ENCODE measurements at regions of chr2 and their contacts with region 1.

Region 1: GRCh38 chr2:3780477-3781402 is 77.4 kb downstream of the DCDC2C start:
- DNase-seq: peak in 1 of 2 experiments; percentile 16
- H3K4me3 ChIP-seq: no peak overlapping the region
- H3K27ac ChIP-seq: no peak overlapping the region
- H3K4me1 ChIP-seq: no peaks in the 10 kb centered on the region
- H3K27me3 ChIP-seq: peaks cover 94% of the 10 kb centered on the region
- CTCF ChIP-seq: peak; percentile 66

Region 2: DNA sequence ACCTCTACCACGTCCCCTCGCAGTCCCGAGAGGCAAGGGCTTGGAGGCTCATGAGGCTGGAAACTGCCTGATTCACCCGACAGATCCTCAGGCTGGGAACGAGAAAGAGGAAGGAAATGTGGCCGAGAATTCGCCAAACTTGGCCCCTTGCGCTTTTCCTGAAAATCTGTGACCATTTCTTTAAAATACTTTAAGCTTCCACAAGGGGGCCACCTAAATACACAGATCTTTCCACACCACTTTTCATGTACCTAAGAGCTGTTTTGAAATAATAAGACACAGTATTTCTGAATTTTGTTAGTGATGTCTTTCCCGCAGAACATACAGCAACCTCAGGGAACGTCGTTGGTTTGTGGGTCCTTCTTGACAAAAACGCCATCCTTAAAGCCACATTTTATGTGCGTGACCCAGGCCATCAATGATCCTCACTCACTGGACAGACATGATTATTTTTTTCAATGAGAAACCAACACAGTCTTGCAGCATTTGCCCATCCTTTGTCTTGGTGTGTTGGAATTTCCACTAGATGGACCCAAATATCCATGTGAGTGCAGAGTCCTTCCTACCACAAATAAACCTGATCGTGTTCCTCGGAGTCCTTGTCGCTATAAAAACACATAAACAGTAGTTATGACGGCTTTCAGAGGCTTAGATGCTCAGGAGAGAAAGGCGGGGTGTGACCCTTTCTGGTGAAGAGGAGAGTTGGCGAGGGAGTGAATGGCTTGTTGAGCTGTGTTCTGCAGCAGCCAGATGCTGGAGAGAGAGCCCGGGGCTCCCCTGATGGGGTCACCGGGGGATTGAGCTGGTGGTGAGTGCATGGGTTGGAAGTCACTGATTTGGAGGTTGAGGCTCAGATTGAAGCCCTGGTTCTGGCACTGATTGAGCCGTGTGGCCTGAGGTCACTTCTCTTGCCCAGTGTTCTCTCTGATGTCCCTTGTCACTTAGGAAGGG is 52.4 kb before region 1 on chr2:
- CTCF ChIA-PET with region 1: no interaction called
- POLR2A ChIA-PET with region 1: no interaction called
- intact Hi-C with region 1: loop called (anchors 2 kb)
- DNase-seq: peak in 1 of 2 experiments; percentile 42
- H3K4me3 ChIP-seq: no peak overlapping the region
- H3K27ac ChIP-seq: no peak overlapping the region
- H3K4me1 ChIP-seq: no peaks in the 10 kb centered on the region
- H3K27me3 ChIP-seq: peaks cover 95% of the 10 kb centered on the region
- CTCF ChIP-seq: peak; percentile 82

Region 3: GRCh38 chr2:3857576-3857975 is 76.8 kb after region 1 on chr2:
- CTCF ChIA-PET with region 1: no interaction called
- POLR2A ChIA-PET with region 1: no interaction called
- intact Hi-C with region 1: no loop called
- DNase-seq: no peak
- H3K4me3 ChIP-seq: no peak overlapping the region
- H3K27ac ChIP-seq: no peak overlapping the region
- H3K4me1 ChIP-seq: no peaks in the 10 kb centered on the region
- H3K27me3 ChIP-seq: no peaks in the 10 kb centered on the region
- CTCF ChIP-seq: no peak